ENCODE measurements at regions of chr3 and their contacts with region 1.

Region 1: DNA sequence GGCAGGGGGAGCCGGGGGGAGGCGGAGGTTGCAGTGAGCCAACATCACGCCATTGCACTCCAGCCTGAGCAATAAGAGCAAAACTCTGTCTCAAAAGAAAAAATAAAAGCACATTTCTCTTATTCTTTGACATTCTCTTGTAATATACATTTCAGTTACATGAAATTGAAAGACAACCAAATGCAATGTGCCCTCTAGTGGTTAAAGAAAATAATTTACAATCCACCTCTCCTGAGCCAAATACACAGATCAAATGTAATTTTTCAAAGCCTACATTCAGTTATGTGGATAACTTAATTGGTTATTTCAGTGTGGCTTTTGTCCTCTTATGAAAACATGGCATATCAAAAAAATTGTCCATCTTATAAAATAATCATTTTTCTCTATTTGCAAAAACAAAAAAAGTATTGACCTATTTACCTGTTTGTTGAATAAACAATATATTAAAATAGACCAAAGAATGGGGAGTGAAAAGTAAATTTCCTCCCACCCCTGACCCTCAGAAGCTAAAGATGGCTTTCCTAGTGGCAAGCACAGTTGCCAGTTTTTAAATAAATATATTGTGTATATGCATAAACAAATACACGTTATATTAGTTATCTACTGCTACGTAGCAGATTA is 14.2 kb upstream of the U2SURP start:
- DNase-seq: peak; percentile 54
- H3K4me3 Mint-ChIP-seq: no peak overlapping the region
- H3K27ac Mint-ChIP-seq: no peak overlapping the region
- H3K4me1 Mint-ChIP-seq: no peaks in the 10 kb centered on the region
- H3K27me3 Mint-ChIP-seq: peaks cover 11% of the 10 kb centered on the region
- CTCF ChIP-seq: peak; percentile 54

Region 2: DNA sequence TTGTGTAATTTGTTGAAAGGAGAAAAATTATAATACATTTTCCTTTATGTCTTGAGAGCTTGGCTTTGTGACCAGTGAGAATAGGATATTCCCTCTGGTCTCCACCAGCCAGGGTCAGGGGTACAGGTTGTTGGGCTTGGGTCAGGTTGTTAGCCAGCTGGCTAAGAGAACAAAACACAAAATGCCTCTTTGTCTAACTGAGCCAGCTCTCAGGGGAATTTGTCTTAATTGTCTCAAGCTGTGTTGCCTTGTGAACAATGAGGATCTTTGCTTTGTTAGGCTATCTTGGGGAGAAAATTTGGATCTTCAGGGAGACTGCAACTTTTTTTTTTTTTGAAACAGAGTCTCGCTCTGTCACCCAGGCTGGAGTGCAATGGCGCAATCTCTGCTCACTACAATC is 744.1 kb before region 1 on chr3:
- CTCF ChIA-PET with region 1: no interaction called
- POLR2A ChIA-PET with region 1: no interaction called
- intact Hi-C with region 1: no loop called
- DNase-seq: no peak
- H3K4me3 Mint-ChIP-seq: no peak overlapping the region
- H3K27ac Mint-ChIP-seq: no peak overlapping the region
- H3K4me1 Mint-ChIP-seq: peaks cover 6% of the 10 kb centered on the region
- H3K27me3 Mint-ChIP-seq: no peaks in the 10 kb centered on the region
- CTCF ChIP-seq: no peak

Region 3: DNA sequence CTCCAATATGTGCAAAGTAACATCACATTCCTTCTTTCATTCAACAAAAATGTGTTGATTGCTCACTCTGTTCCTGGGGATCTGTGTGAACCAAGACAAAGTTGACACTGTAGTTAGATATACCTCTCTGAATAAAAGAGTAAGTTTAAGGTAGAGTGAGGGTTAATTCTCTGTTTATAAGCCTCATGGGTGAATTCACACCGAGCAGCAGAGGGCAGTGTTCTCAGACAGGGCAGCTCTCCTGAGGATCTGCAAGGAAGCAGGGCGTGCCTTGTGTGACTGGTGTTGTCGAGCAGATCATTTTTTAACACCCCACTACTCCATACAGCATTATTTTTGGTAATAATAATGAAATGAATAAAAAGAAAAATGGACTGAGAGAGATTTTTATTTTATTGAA is 58.1 kb before region 1 on chr3:
- CTCF ChIA-PET with region 1: interaction called, 7 read pairs
- POLR2A ChIA-PET with region 1: interaction called, 3 read pairs
- intact Hi-C with region 1: loop called (anchors 2 kb)
- DNase-seq: peak; percentile 70
- H3K4me3 Mint-ChIP-seq: no peak overlapping the region
- H3K27ac Mint-ChIP-seq: no peak overlapping the region
- H3K4me1 Mint-ChIP-seq: peaks cover 15% of the 10 kb centered on the region
- H3K27me3 Mint-ChIP-seq: no peaks in the 10 kb centered on the region
- CTCF ChIP-seq: peak; percentile 53

Region 4: DNA sequence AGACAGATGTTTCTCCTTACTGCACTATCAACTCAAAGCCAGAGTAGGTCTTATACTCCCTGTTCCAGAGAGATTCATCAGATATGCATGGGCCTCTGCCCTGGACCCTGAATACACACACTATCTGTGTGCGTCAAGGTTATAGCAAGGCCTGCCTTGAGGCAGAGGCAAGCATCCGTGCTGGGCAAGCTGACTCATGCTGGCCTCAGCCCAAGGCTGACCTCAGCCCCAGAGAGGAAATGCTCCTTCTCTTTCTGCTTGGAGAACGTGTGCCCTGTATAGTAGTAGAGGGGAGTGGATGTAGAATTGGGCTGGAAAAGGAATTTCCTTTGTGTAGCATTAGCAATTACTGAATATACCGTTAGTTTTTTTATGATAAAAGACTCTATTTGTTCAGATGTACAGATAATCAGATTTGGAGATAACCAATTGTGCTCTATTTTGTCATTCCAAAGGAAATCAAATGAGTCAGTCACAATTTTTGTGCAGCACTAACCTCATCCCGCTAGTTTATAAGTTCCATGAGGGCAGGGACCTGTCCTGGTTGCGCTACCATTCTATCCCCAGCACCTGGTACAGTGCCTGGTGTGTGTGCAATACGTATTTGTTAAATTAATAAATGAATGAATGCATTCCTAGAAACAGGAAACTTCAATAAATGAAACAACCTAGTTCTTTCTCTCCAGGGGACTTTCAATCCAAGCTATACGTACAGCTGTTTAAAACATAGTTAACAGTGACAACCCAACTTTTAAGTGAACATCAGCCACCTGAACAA is 10.4 kb before region 1 on chr3:
- CTCF ChIA-PET with region 1: interaction called, 11 read pairs
- POLR2A ChIA-PET with region 1: no interaction called
- intact Hi-C with region 1: no loop called
- DNase-seq: peak; percentile 92
- H3K4me3 Mint-ChIP-seq: no peak overlapping the region
- H3K27ac Mint-ChIP-seq: peak overlapping the region; percentile 9
- H3K4me1 Mint-ChIP-seq: peaks cover 5% of the 10 kb centered on the region
- H3K27me3 Mint-ChIP-seq: no peaks in the 10 kb centered on the region
- CTCF ChIP-seq: no peak

Region 5: GRCh38 chr3:143070977-143071551 is 83.9 kb after region 1 on chr3:
- CTCF ChIA-PET with region 1: no interaction called
- POLR2A ChIA-PET with region 1: no interaction called
- intact Hi-C with region 1: no loop called
- DNase-seq: no peak
- H3K4me3 Mint-ChIP-seq: no peak overlapping the region
- H3K27ac Mint-ChIP-seq: no peak overlapping the region
- H3K4me1 Mint-ChIP-seq: no peaks in the 10 kb centered on the region
- H3K27me3 Mint-ChIP-seq: no peaks in the 10 kb centered on the region
- CTCF ChIP-seq: no peak

Measured in MCF 10A (cell line).